Ascending aorta (tissue), 2 donors: ENCODE measurements at regions of chr13 and their contacts with region 1.

Region 1: DNA sequence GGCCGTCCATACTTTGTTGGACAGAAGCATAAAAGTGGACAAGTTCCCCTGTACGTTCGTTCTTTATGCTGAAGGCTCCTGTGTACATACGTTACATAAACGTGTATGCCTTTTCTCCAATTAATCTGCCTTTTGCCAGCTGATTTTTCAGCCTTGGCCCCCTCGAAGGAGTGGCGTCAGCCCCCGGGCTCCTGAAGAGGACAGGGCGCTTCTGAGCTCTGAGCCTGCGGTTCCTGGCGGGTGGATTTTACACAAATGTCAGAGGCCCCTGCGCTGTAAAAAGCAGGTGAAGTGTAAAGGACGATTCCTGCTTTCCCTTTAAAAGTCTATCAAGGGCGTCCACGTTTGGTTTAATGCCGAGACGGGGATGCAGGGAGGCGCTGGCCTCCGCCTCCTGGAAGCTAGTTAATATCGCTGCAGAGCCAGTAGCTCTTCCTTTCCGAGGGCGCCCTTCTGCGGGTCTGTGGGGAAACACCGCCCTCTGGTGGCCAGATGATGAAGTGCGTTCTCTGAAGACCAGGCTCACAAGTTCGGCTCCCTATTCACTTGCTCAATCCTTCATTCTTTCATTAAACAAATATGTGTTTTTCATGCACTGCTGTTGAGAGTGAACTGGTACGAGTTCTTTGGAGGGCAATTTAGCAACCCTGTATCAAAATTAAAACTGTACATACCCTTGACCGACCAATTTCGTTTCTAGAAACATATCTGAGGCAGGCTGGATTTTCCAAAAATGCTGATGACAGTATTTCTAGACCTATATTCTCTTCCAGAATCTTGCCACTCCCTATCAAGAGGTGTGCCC is 62.0 kb downstream of the GPR12 start:
- DNase-seq: peak in 1 of 2 donors; percentile 90
- H3K4me3 ChIP-seq: peak overlapping the region; percentile 39 to 44
- H3K27ac ChIP-seq: no peak overlapping the region
- H3K4me1 ChIP-seq: no peaks in the 10 kb centered on the region
- H3K27me3 ChIP-seq: no peaks in the 10 kb centered on the region
- CTCF ChIP-seq: peak; percentile 84 to 97 (median 95)

Region 2: DNA sequence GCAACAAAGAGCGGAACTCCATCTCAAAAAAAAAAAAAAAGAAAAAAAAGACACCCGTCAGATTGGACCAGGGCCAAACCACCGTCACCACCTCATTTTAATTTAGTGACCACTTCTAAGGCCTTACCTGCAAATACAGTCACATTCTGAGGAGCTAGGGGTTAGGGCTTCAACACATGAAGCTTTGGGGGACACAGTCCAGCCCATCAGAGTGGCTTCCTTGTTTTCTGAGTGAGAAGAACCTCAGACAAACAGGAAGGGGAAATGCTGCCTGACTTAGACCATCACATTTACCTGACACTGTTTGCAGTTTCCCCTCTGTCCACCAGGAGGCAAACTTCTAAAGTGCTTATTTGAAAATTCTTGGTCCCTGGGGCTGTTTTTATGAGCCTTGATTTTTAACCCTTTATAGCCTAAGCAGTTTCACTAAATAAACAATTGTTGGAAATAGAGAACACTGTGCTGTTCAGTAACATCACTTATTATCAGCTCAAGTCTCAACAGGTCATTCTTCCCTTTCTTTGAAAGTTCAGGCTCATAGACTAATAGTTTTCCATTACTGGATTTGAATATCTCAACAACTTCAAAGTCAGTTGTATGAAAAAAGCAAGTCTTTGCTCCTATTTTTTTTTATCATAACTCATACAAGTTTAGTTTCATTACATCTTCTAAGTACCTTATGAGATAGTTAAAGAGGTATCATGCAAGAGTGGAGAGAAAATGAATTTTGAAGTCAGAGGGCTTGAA is 216.0 kb before region 1 on chr13:
- intact Hi-C with region 1: loop called (anchors 2 kb)
- DNase-seq: peak in 1 of 2 donors; percentile 82
- H3K4me3 ChIP-seq: no peak overlapping the region
- H3K27ac ChIP-seq: no peak overlapping the region
- H3K4me1 ChIP-seq: no peaks in the 10 kb centered on the region
- H3K27me3 ChIP-seq: no peaks in the 10 kb centered on the region
- CTCF ChIP-seq: peak; percentile 58 to 81 (median 74)

Region 3: GRCh38 chr13:26498656-26499591 is 199.7 kb before region 1 on chr13:
- intact Hi-C with region 1: loop called (anchors 5 kb)
- DNase-seq: no peak
- H3K4me3 ChIP-seq: no peak overlapping the region
- H3K27ac ChIP-seq: no peak overlapping the region
- H3K4me1 ChIP-seq: no peaks in the 10 kb centered on the region
- H3K27me3 ChIP-seq: no peaks in the 10 kb centered on the region
- CTCF ChIP-seq: no peak

Region 4: GRCh38 chr13:26749285-26749684 is 50.7 kb after region 1 on chr13:
- intact Hi-C with region 1: no loop called
- DNase-seq: no peak
- H3K4me3 ChIP-seq: no peak overlapping the region
- H3K27ac ChIP-seq: no peak overlapping the region
- H3K4me1 ChIP-seq: no peaks in the 10 kb centered on the region
- H3K27me3 ChIP-seq: no peaks in the 10 kb centered on the region
- CTCF ChIP-seq: no peak

Region 5: GRCh38 chr13:26831336-26831908 is 132.8 kb after region 1 on chr13:
- intact Hi-C with region 1: no loop called
- DNase-seq: peak in 1 of 2 donors; percentile 41
- H3K4me3 ChIP-seq: no peak overlapping the region
- H3K27ac ChIP-seq: no peak overlapping the region
- H3K4me1 ChIP-seq: no peaks in the 10 kb centered on the region
- H3K27me3 ChIP-seq: no peaks in the 10 kb centered on the region
- CTCF ChIP-seq: no peak